K562 (cell line): ENCODE measurements at regions of chr4 and their contacts with region 1.

Region 1: DNA sequence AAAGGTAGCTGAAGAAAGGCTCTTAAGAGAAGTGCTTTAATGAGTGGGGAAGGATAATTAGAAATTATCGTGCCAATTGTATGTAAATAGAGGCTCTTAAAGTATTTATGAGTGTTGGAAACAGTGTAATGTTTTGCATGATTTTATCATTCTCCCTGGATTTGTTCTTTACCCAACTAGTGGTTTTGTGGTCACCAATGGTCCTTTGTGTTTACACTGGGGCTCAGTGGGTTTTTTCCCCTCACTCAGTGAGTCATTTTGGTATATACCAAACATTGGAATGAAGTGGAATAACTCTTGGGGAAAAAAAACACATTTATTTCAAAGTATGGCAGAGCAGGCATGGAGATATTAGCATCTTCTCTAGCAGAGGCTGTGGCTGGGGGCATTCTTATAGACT is 20.8 kb upstream of the LGI2 start:
- DNase-seq: no peak
- ATAC-seq: no peak
- H3K4me3 ChIP-seq: no peak overlapping the region
- H3K27ac ChIP-seq: no peak overlapping the region; the same call in 2 of the 3 replicates
- H3K4me1 ChIP-seq: peaks cover 5 to 13% of the 10 kb centered on the region in 2 experiments; a peak in 3 of 5 replicates
- H3K27me3 ChIP-seq: no peaks in the 10 kb centered on the region
- CTCF ChIP-seq: no peak
- EP300 ChIP-seq: no peak
- POLR2A ChIP-seq: no peak
- RAD21 ChIP-seq: no peak

Region 2: GRCh38 chr4:24924309-24924781 is 127.2 kb before region 1 on chr4:
- CTCF ChIA-PET with region 1: no interaction called
- POLR2A ChIA-PET with region 1: no interaction called
- in situ Hi-C with region 1: no loop called
- intact Hi-C with region 1: no loop called
- DNase-seq: no peak
- ATAC-seq: no peak
- H3K4me3 ChIP-seq: no peak overlapping the region
- H3K27ac ChIP-seq: no peak overlapping the region
- H3K4me1 ChIP-seq: no peaks in the 10 kb centered on the region
- H3K27me3 ChIP-seq: peaks cover 0 to 6% of the 10 kb centered on the region in 2 experiments; a peak in 1 of 5 replicates
- CTCF ChIP-seq: no peak
- EP300 ChIP-seq: no peak
- POLR2A ChIP-seq: no peak
- RAD21 ChIP-seq: no peak

Region 3: GRCh38 chr4:25144870-25145481 is 93.4 kb after region 1 on chr4:
- CTCF ChIA-PET with region 1: no interaction called
- POLR2A ChIA-PET with region 1: no interaction called
- in situ Hi-C with region 1: no loop called
- intact Hi-C with region 1: loop called (anchors 5 kb)
- DNase-seq: peak; percentile 21 to 33 (median 26)
- ATAC-seq: peak; percentile 65; the same call in 2 of the 3 replicates
- H3K4me3 ChIP-seq: no peak overlapping the region
- H3K27ac ChIP-seq: no peak overlapping the region
- H3K4me1 ChIP-seq: no peaks in the 10 kb centered on the region
- H3K27me3 ChIP-seq: no peaks in the 10 kb centered on the region
- CTCF ChIP-seq: peak; percentile 23 to 60 (median 38); a peak in 3 of 6 replicates
- EP300 ChIP-seq: no peak
- POLR2A ChIP-seq: no peak
- RAD21 ChIP-seq: peak; percentile 29 to 55